Psoas muscle (tissue), 8 donors: ENCODE measurements at regions of chr19 and their contacts with region 1.

Region 1: DNA sequence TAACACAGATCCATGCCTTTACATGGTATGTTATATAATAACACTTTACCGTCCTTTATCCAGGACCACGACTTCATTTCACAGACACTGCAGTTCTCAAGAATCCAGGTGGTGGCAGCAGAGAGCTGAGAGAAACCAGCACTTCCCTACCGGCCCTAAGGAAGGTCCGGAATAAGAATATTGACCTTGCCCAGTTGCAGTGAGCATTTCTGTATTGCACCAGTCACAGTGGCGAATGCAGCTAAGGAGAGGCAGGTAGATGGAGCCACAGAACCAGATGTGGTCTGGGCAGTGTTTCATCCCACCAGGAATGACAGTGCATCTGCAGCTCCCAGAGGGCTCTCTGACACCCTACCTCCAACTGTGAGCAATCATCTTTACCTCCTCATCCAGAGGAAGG is 44.6 kb downstream of the ZNF787 start:
- DNase-seq: no peak
- ATAC-seq: peak; percentile 59 to 82 (median 74)
- H3K4me3 ChIP-seq: no peak overlapping the region
- H3K27ac ChIP-seq: no peak overlapping the region
- H3K4me1 ChIP-seq: peaks cover 7% of the 10 kb centered on the region
- H3K27me3 ChIP-seq: peaks cover 0 to 6% (median 0%) of the 10 kb centered on the region in 3 donors
- CTCF ChIP-seq: peak; percentile 87

Region 2: GRCh38 chr19:56170261-56170660 is 93.8 kb after region 1 on chr19:
- intact Hi-C with region 1: loop called (anchors 2 kb)
- DNase-seq: peak in 1 of 2 donors; percentile 32
- ATAC-seq: peak in 3 of 4 donors; percentile 29 to 58 (median 50)
- H3K4me3 ChIP-seq: no peak overlapping the region
- H3K27ac ChIP-seq: no peak overlapping the region
- H3K4me1 ChIP-seq: no peaks in the 10 kb centered on the region
- H3K27me3 ChIP-seq: peaks cover 0 to 18% (median 4%) of the 10 kb centered on the region in 3 donors
- CTCF ChIP-seq: no peak

Region 3: DNA sequence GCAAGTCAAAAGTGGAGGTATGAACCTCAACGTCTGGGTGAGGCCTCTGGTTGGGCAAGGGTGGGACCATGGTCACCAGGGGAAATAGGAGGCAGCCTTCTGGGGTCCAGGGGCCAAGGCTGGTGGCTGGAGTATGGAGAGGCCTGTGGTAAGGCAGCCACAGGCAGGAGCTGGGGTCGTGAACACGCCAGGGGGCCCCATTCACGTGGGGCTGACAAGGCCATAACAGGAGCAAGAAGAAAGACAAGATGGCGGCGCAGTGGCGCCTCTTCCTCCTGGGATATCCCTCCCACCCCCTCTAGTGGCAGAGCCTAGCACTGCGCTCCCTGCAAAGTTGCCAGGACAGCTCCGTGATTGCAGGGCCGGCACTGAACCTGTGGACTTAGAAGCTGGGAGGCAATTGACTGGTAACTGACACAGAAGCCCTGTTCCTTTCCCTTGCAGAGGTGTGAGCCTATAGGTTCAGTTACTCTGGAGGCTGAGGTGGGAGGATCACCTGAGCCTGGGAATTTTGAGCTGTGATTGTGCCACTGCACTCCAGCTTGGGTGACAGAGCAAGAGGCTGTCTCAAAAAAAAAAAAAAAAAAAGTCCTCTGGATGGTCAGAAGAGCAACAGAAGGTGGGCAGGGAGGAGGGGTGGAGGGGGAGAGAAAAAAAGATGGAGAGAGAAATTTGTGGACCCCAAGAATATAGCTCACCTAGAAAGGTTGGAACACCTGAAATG is 176.4 kb after region 1 on chr19:
- intact Hi-C with region 1: loop called in 1 of 2 experiments (anchors 5 kb)
- DNase-seq: peak; percentile 56 to 74
- ATAC-seq: peak in 3 of 4 donors; percentile 46 to 60 (median 59)
- H3K4me3 ChIP-seq: no peak overlapping the region
- H3K27ac ChIP-seq: no peak overlapping the region
- H3K4me1 ChIP-seq: no peaks in the 10 kb centered on the region
- H3K27me3 ChIP-seq: no peaks in the 10 kb centered on the region
- CTCF ChIP-seq: peak; percentile 61

Region 4: GRCh38 chr19:56350416-56351045 is 274.0 kb after region 1 on chr19:
- intact Hi-C with region 1: loop called (anchors 5 kb)
- DNase-seq: no peak
- ATAC-seq: peak in 2 of 4 donors; percentile 51 to 59
- H3K4me3 ChIP-seq: peak overlapping the region; percentile 34
- H3K27ac ChIP-seq: no peak overlapping the region
- H3K4me1 ChIP-seq: no peaks in the 10 kb centered on the region
- H3K27me3 ChIP-seq: no peaks in the 10 kb centered on the region
- CTCF ChIP-seq: peak; percentile 86